ENCODE measurements at regions of chr3 and their contacts with region 1.

Region 1: DNA sequence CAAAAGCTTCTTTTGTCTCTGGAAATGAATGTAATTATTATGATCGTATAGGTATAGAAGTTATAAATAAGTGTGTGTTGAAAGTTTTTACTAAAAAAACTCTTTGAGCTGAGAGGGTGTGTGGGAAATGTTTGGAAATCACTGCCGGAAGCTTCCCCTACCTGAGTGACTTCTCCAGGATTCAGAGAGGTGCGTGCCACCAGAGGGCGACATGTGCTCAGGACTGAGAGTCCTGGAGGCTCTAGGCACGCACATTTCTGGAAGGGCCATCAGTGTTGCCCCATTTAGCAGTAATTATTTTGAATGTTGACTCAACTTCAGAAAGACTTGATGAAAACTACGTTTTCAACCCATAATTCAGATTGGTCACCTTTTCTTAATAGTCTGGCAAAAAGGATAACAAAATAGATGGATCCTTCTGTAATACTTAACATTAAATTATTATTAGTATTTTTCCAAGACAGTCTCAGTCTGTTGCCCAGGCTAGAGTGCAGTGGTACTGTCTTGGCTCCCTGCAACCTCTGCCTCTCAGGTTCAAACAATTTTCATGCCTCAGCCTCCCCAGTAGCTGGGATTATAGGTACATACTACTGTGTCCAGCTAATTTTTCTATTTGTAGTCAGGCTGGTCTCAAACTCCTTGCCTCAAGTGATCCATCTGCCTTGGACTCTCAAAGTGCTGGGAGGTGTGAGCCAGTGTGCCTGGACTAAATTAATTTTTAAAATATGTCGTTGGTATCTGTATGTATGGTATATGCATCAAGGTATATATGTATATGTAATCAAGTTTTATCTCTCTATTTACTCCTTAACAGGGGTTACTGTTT is 34.5 kb downstream of the GPR171 start:
- DNase-seq: peak; percentile 54 to 89 (median 82)
- ATAC-seq: peak; percentile 76
- H3K4me3 ChIP-seq: no peak overlapping the region
- H3K4me3 Mint-ChIP-seq: no peak overlapping the region
- H3K27ac ChIP-seq: no peak overlapping the region
- H3K27ac Mint-ChIP-seq: no peak overlapping the region
- H3K4me1 ChIP-seq: peaks cover 38% of the 10 kb centered on the region
- H3K4me1 Mint-ChIP-seq: peaks cover 34% of the 10 kb centered on the region
- H3K27me3 ChIP-seq: no peaks in the 10 kb centered on the region
- H3K27me3 Mint-ChIP-seq: no peaks in the 10 kb centered on the region
- CTCF ChIP-seq: peak; percentile 97

Region 2: DNA sequence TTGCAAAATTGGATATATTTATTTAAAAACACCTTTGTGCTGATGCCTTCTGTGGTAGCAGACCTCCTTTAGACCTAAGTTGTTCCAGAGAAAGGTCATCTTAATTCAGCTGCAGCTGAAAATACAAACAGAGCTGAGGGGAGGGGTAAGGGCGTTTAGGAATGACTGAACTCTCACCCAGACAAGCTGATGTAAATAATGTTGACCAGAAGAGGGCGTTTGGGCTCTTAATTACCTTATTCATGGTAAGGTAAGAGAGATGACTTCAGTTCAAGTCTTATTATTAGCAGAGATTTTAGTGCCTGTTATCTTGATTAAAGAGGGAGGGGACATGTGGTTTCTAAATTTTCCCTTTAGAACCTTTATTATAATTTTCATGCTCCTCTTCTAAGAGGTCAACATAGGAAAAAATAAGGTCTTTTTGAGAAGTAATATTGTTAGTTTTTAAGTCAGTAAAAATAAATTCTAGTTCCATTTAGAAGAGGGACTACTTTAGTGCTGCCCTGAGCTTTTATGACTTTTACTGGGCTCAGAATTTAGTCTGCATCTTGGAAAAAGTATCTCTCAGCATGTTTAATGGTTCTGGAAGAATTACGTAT is 11.8 kb before region 1 on chr3:
- CTCF ChIA-PET with region 1: interaction called, 20 read pairs
- POLR2A ChIA-PET with region 1: interaction called, 6 read pairs
- intact Hi-C with region 1: loop called in 1 of 2 experiments (anchors 1 kb)
- DNase-seq: peak in 3 of 9 experiments; percentile 34 to 73 (median 65)
- ATAC-seq: peak; percentile 69
- H3K4me3 ChIP-seq: no peak overlapping the region
- H3K4me3 Mint-ChIP-seq: no peak overlapping the region
- H3K27ac ChIP-seq: no peak overlapping the region
- H3K27ac Mint-ChIP-seq: no peak overlapping the region
- H3K4me1 ChIP-seq: no peaks in the 10 kb centered on the region
- H3K4me1 Mint-ChIP-seq: no peaks in the 10 kb centered on the region
- H3K27me3 ChIP-seq: no peaks in the 10 kb centered on the region
- H3K27me3 Mint-ChIP-seq: peaks cover 5% of the 10 kb centered on the region
- CTCF ChIP-seq: peak; percentile 78

Region 3: GRCh38 chr3:151203051-151203420 is 34.6 kb after region 1 on chr3 and contains the start of gene GPR171:
- CTCF ChIA-PET with region 1: interaction called, 81 read pairs
- POLR2A ChIA-PET with region 1: interaction called, 9 read pairs
- intact Hi-C with region 1: loop called in 1 of 2 experiments (anchors 1 kb)
- DNase-seq: peak; percentile 46 to 91 (median 68)
- ATAC-seq: peak; percentile 84
- H3K4me3 ChIP-seq: peak within 1 kb of the TSS; percentile 50 to 59
- H3K4me3 Mint-ChIP-seq: peak within 1 kb of the TSS; percentile 76
- H3K27ac ChIP-seq: peak within 1 kb of the TSS; percentile 36 to 72
- H3K27ac Mint-ChIP-seq: peak within 1 kb of the TSS; percentile 91
- H3K4me1 ChIP-seq: peaks cover 67% of the 10 kb centered on the region
- H3K4me1 Mint-ChIP-seq: peaks cover 81% of the 10 kb centered on the region
- H3K27me3 ChIP-seq: no peaks in the 10 kb centered on the region
- H3K27me3 Mint-ChIP-seq: no peaks in the 10 kb centered on the region
- CTCF ChIP-seq: no peak
- total RNA-seq, gene GPR171: 11.5 to 13.4 TPM

Region 4: DNA sequence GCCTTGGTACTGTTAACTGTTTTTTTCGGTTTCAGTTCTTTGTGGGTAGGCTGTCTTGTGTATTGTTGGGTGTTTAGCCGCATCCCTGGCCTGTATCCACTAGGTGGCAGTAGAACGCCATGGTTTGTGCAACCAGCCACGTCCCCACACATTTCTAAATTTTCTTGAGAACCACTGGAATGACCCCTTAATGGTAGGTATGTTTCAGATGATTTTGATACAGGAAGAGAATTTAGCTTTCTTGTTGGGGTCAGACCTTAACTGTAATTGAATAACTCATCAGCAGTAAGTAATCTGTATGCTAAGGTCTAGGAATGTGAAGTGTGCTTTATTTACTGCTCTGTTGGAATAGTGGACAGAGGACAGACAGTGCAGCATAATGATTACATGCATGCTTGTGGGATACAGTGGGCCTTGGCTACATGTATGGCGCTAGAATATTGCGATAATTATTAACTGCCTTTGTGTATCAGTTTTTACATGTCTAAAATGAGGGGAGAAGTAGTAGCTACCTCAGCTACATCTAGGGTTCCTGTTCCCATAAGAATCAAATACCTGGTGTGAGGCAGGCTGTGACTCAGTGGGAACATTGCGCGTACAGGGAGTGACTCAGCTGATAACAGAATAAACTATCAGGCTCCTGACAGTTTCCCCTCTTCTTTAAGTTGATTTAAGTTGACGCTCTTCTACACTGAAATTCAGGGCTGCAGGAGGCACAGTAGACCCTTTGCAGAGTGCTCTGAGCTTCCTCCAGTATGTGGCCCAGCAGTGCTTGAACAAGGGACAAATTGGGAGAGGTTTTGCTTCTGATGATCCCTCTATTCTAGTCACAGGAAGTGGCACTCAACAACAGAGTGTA is 59.6 kb after region 1 on chr3:
- CTCF ChIA-PET with region 1: interaction called, 147 read pairs
- POLR2A ChIA-PET with region 1: interaction called, 3 read pairs
- intact Hi-C with region 1: loop called (anchors 1 kb)
- DNase-seq: peak; percentile 61 to 88 (median 79)
- ATAC-seq: peak; percentile 83
- H3K4me3 ChIP-seq: no peak overlapping the region
- H3K4me3 Mint-ChIP-seq: no peak overlapping the region
- H3K27ac ChIP-seq: no peak overlapping the region
- H3K27ac Mint-ChIP-seq: peak overlapping the region; percentile 4
- H3K4me1 ChIP-seq: peaks cover 16% of the 10 kb centered on the region
- H3K4me1 Mint-ChIP-seq: peaks cover 48% of the 10 kb centered on the region
- H3K27me3 ChIP-seq: no peaks in the 10 kb centered on the region
- H3K27me3 Mint-ChIP-seq: no peaks in the 10 kb centered on the region
- CTCF ChIP-seq: peak; percentile 92

Region 5: DNA sequence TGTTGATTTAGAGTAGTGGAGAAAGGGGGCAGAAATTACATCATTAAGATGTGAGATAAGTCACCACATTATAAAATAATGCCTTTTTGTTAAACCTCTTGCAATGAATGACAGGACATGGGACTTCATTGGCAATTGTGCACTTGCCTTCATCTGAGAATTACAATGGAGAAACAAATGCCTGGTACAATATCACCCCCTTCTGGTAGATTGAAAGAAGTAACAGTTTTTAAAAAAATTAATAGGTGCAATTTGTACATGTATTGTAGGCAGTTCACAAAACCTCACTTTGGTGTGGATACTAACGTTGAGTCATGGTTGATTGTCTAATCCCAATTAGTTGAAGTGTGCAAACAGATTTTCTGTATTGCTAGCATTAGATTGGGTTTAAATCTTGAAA is 114.4 kb after region 1 on chr3:
- CTCF ChIA-PET with region 1: interaction called, 333 read pairs
- POLR2A ChIA-PET with region 1: interaction called, 3 read pairs
- intact Hi-C with region 1: loop called (anchors 1 kb)
- DNase-seq: peak in 2 of 9 experiments; percentile 73 to 79
- ATAC-seq: peak; percentile 56
- H3K4me3 ChIP-seq: no peak overlapping the region
- H3K4me3 Mint-ChIP-seq: no peak overlapping the region
- H3K27ac ChIP-seq: no peak overlapping the region
- H3K27ac Mint-ChIP-seq: no peak overlapping the region
- H3K4me1 ChIP-seq: peaks cover 10% of the 10 kb centered on the region
- H3K4me1 Mint-ChIP-seq: peaks cover 18% of the 10 kb centered on the region
- H3K27me3 ChIP-seq: no peaks in the 10 kb centered on the region
- H3K27me3 Mint-ChIP-seq: no peaks in the 10 kb centered on the region
- CTCF ChIP-seq: peak; percentile 90

Region 6: GRCh38 chr3:151838583-151839312 is 670.3 kb after region 1 on chr3:
- CTCF ChIA-PET with region 1: interaction called, 4 read pairs
- POLR2A ChIA-PET with region 1: no interaction called
- intact Hi-C with region 1: loop called (anchors 2 to 5 kb)
- DNase-seq: peak in 5 of 9 experiments; percentile 2 to 63 (median 30)
- ATAC-seq: peak; percentile 49
- H3K4me3 ChIP-seq: no peak overlapping the region
- H3K4me3 Mint-ChIP-seq: no peak overlapping the region
- H3K27ac ChIP-seq: no peak overlapping the region
- H3K27ac Mint-ChIP-seq: no peak overlapping the region
- H3K4me1 ChIP-seq: no peaks in the 10 kb centered on the region
- H3K4me1 Mint-ChIP-seq: no peaks in the 10 kb centered on the region
- H3K27me3 ChIP-seq: peaks cover 0 to 2% of the 10 kb centered on the region in 2 experiments
- H3K27me3 Mint-ChIP-seq: peaks cover 9% of the 10 kb centered on the region
- CTCF ChIP-seq: peak; percentile 59

Region 7: GRCh38 chr3:153161138-153161713 is 1992.7 kb after region 1 on chr3:
- CTCF ChIA-PET with region 1: no interaction called
- POLR2A ChIA-PET with region 1: no interaction called
- intact Hi-C with region 1: no loop called
- DNase-seq: peak; percentile 79 to 97 (median 90)
- ATAC-seq: peak; percentile 78
- H3K4me3 ChIP-seq: peak overlapping the region; percentile 69 to 75
- H3K4me3 Mint-ChIP-seq: peak overlapping the region; percentile 99
- H3K27ac ChIP-seq: peak overlapping the region; percentile 62 to 74
- H3K27ac Mint-ChIP-seq: peak overlapping the region; percentile 95
- H3K4me1 ChIP-seq: peaks cover 24% of the 10 kb centered on the region
- H3K4me1 Mint-ChIP-seq: peaks cover 34% of the 10 kb centered on the region
- H3K27me3 ChIP-seq: no peaks in the 10 kb centered on the region
- H3K27me3 Mint-ChIP-seq: no peaks in the 10 kb centered on the region
- CTCF ChIP-seq: no peak

Measured in CD8-positive, alpha-beta T cell (primary cell).